Right ventricle myocardium superior (tissue), 1 donor: ENCODE measurements at regions of chr6 and their contacts with region 1.

Region 1: GRCh38 chr6:33761922-33762629 is 15.4 kb upstream of the IP6K3 start:
- DNase-seq: peak; percentile 90
- ATAC-seq: peak; percentile 95

Region 2: GRCh38 chr6:33711140-33712129 is 50.6 kb before region 1 on chr6 and contains the start of gene UQCC2:
- intact Hi-C with region 1: loop called (anchors 5 kb)
- DNase-seq: peak; percentile 99
- ATAC-seq: peak; percentile 98
- total RNA-seq, gene UQCC2: 208 TPM

Region 3: DNA sequence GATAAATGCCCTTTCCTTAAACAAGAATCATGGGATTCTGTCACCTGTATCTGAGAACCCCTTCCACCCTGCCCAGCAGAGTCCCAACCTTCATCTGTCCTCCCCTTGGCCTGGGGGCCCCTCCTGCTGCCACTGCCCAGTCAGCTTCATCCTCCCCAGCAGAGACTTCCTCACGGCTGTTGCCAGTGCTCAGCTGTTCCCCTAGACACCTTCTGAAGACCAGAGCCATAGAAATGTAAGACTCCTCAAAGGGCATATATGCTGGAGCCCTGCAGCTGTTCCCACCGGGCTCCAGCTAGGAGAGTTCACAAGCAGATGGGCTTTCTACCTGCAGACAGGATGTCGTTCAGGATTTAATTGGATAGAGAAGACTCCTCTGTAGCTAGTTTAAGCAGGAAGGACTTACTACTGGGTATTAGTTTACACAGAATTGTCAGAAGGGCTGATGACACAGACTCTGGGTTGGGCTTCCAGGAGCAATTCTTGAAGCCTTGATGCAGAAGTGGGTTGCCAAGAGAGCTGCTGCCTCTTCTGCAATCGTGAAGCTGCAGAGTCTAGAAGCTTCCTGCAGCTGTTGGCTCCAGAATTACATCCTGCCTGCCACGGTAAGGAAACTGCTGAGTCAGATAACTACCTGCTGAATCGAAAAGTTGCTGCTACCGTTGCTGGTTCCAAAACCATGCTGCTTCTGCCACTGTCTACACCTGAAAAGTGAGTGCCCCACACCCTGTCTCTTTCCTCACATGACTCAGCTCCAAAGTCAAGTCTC is 98.8 kb after region 1 on chr6:
- intact Hi-C with region 1: no loop called
- DNase-seq: no peak
- ATAC-seq: no peak